Breast epithelium (tissue), 4 donors: ENCODE measurements at regions of chr3 and their contacts with region 1.

Region 1: GRCh38 chr3:175246766-175247165 is 387.6 kb downstream of the NAALADL2 start:
- DNase-seq: no peak
- H3K4me3 ChIP-seq: no peak overlapping the region
- H3K27ac ChIP-seq: no peak overlapping the region
- H3K4me1 ChIP-seq: no peaks in the 10 kb centered on the region
- H3K27me3 ChIP-seq: no peaks in the 10 kb centered on the region
- CTCF ChIP-seq: no peak
- POLR2A ChIP-seq: no peak

Region 2: GRCh38 chr3:175304404-175304803 is 57.6 kb after region 1 on chr3:
- intact Hi-C with region 1: loop called (anchors 2 kb)
- DNase-seq: no peak
- H3K4me3 ChIP-seq: no peak overlapping the region
- H3K27ac ChIP-seq: no peak overlapping the region
- H3K4me1 ChIP-seq: no peaks in the 10 kb centered on the region
- H3K27me3 ChIP-seq: no peaks in the 10 kb centered on the region
- CTCF ChIP-seq: no peak
- POLR2A ChIP-seq: no peak